Upper lobe of right lung (tissue), 1 donor: ENCODE measurements at regions of chr20 and their contacts with region 1.

Region 1: DNA sequence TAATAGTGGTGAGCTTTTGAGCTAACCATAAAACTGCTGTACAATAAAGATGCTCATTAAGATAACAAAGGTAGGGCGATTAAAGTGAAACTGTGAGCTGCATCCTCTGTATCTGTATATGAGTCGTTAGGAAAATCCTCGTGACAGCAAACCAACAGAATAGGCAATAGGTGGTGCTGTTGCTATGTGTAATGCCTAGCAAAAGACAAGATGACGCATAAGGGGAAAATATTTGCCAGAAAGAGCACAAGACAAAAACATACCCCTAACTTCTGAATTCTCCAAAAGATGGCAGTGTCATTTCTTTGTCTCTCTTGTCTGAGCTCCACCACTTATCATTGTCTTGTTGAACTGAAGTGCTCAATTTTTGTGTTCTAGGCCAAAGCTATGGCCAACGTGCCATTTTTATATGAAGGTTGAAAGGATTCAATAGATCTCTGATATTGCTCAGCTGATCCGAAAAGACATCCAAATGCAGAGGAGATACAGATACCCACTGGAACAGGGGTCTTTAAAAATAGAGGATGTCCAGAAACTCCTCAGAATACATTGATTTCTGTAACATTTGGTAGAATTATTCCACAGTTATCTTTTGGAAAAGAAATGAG is 56.3 kb upstream of the ANKEF1 start:
- DNase-seq: no peak
- ATAC-seq: peak; percentile 96
- H3K4me3 ChIP-seq: no peak overlapping the region
- H3K27ac ChIP-seq: no peak overlapping the region
- H3K4me1 ChIP-seq: no peaks in the 10 kb centered on the region
- H3K27me3 ChIP-seq: no peaks in the 10 kb centered on the region
- CTCF ChIP-seq: peak; percentile 80

Region 2: GRCh38 chr20:9500121-9500520 is 478.4 kb before region 1 on chr20:
- intact Hi-C with region 1: no loop called
- DNase-seq: no peak
- ATAC-seq: peak; percentile 81
- H3K4me3 ChIP-seq: no peak overlapping the region
- H3K27ac ChIP-seq: no peak overlapping the region
- H3K4me1 ChIP-seq: no peaks in the 10 kb centered on the region
- H3K27me3 ChIP-seq: peaks cover under 1% of the 10 kb centered on the region
- CTCF ChIP-seq: no peak

Region 3: DNA sequence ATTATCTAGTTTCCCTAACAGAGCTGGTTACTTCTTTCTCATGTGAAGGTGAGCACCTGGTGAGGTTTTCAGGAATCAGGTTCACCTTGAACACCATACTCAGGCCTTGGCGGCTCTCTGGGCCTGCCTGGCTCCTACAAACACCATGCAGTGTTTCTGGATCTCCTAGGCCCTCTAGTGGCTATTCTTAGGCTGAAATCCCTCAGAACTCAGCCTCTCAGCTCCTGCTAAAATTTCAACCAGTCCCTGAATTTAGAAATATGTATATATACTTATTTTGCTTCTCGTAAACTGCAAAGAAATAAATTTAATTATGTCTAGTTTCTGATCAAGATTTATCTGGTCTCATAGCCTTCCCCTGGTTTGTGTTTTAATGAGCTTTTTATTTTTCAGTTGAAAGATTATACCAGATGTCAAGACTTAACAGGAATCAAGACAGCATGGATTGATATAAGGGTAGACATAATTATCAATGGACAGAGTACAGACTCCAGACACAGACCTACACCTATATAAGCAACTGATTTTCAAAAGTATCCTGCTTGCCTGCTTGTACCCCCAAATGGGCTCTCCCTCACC is 112.2 kb after region 1 on chr20:
- intact Hi-C with region 1: loop called (anchors 10 kb)
- DNase-seq: peak; percentile 65
- ATAC-seq: peak; percentile 95
- H3K4me3 ChIP-seq: no peak overlapping the region
- H3K27ac ChIP-seq: no peak overlapping the region
- H3K4me1 ChIP-seq: no peaks in the 10 kb centered on the region
- H3K27me3 ChIP-seq: no peaks in the 10 kb centered on the region
- CTCF ChIP-seq: peak; percentile 73

Region 4: GRCh38 chr20:10427060-10427692 is 448.7 kb after region 1 on chr20:
- intact Hi-C with region 1: loop called (anchors 10 kb)
- DNase-seq: no peak
- ATAC-seq: peak; percentile 49
- H3K4me3 ChIP-seq: no peak overlapping the region
- H3K27ac ChIP-seq: no peak overlapping the region
- H3K4me1 ChIP-seq: peaks cover 15% of the 10 kb centered on the region
- H3K27me3 ChIP-seq: no peaks in the 10 kb centered on the region
- CTCF ChIP-seq: peak; percentile 80